CD4-positive, alpha-beta memory T cell (primary cell): ENCODE measurements at regions of chr16 and their contacts with region 1.

Region 1: DNA sequence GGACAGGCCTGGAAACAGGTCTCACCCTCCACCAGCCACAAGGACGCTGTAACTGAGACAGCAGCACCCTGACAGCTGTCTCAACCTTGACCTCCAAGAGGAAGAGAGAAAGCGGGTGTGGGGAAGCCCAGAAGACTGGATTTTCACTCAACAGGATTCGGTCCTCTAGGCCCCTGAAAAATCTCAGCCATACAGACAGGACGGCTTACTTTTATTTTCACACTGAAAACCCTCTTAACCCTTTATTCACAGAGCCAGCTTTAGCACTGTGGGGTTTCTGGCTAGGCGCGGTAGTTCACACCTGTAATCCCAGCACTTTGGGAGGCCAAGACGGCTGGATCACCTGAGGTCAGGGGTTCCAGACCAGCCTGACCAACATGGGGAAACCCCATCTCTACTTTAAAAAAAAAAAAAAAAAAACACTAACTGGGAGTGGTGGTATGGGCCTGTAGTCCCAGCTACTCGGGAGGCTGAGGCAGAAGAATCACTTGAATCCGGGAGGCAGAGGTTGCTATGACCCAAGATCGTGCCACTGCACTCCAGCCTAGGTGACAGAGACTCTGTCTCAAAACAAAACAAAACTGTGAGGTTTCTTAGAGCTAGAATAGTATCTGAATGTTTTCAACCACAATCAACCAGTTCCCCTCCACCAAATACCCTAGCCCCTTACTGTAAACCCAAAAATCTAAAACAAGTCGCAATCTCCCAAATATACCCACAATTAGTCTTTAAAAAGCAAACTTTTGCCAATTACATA is 5.3 kb downstream of the ANKRD11 start:
- DNase-seq: peak in 2 of 5 donors; percentile 19 to 56
- H3K4me3 ChIP-seq: peak overlapping the region in 1 of 2 donors; percentile 6
- H3K4me3 Mint-ChIP-seq: peak overlapping the region; percentile 72 to 92 (median 84)
- H3K27ac ChIP-seq: peak overlapping the region; percentile 42
- H3K27ac Mint-ChIP-seq: peak overlapping the region; percentile 86 to 98 (median 94)
- H3K4me1 ChIP-seq: peaks cover 89% of the 10 kb centered on the region
- H3K4me1 Mint-ChIP-seq: peaks cover 70 to 91% (median 81%) of the 10 kb centered on the region in 4 donors
- H3K27me3 ChIP-seq: no peaks in the 10 kb centered on the region
- H3K27me3 Mint-ChIP-seq: no peaks in the 10 kb centered on the region

Region 2: GRCh38 chr16:89410794-89411309 is 74.2 kb before region 1 on chr16:
- CTCF ChIA-PET with region 1: interaction called, 4 read pairs
- POLR2A ChIA-PET with region 1: interaction called, 31 read pairs
- intact Hi-C with region 1: loop called (anchors 1 kb)
- DNase-seq: peak in 2 of 5 donors; percentile 21 to 28
- H3K4me3 ChIP-seq: no peak overlapping the region
- H3K4me3 Mint-ChIP-seq: peak overlapping the region in 7 of 8 donors; percentile 59 to 84 (median 69)
- H3K27ac ChIP-seq: peak overlapping the region; percentile 45
- H3K27ac Mint-ChIP-seq: peak overlapping the region; percentile 88 to 97 (median 95)
- H3K4me1 ChIP-seq: peaks cover 93% of the 10 kb centered on the region
- H3K4me1 Mint-ChIP-seq: peaks cover 57 to 93% (median 79%) of the 10 kb centered on the region in 4 donors
- H3K27me3 ChIP-seq: no peaks in the 10 kb centered on the region
- H3K27me3 Mint-ChIP-seq: no peaks in the 10 kb centered on the region

Region 3: GRCh38 chr16:89442990-89443731 is 41.9 kb before region 1 on chr16:
- CTCF ChIA-PET with region 1: interaction called, 3 read pairs
- POLR2A ChIA-PET with region 1: interaction called, 14 read pairs
- intact Hi-C with region 1: loop called (anchors 2 kb)
- DNase-seq: peak in 1 of 5 donors; percentile 58
- H3K4me3 ChIP-seq: no peak overlapping the region
- H3K4me3 Mint-ChIP-seq: peak overlapping the region in 7 of 8 donors; percentile 32 to 70 (median 67)
- H3K27ac ChIP-seq: no peak overlapping the region
- H3K27ac Mint-ChIP-seq: peak overlapping the region; percentile 67 to 91 (median 84)
- H3K4me1 ChIP-seq: peaks cover 100% of the 10 kb centered on the region
- H3K4me1 Mint-ChIP-seq: peaks cover 0 to 100% (median 81%) of the 10 kb centered on the region in 4 donors
- H3K27me3 ChIP-seq: no peaks in the 10 kb centered on the region
- H3K27me3 Mint-ChIP-seq: no peaks in the 10 kb centered on the region

Region 4: GRCh38 chr16:89473791-89474414 is 11.2 kb before region 1 on chr16:
- CTCF ChIA-PET with region 1: interaction called, 6 read pairs
- POLR2A ChIA-PET with region 1: interaction called, 29 read pairs
- intact Hi-C with region 1: no loop called
- DNase-seq: peak in 1 of 5 donors; percentile 49
- H3K4me3 ChIP-seq: no peak overlapping the region
- H3K4me3 Mint-ChIP-seq: peak overlapping the region in 7 of 8 donors; percentile 64 to 84 (median 77)
- H3K27ac ChIP-seq: no peak overlapping the region
- H3K27ac Mint-ChIP-seq: peak overlapping the region in 5 of 7 donors; percentile 32 to 83 (median 75)
- H3K4me1 ChIP-seq: peaks cover 95% of the 10 kb centered on the region
- H3K4me1 Mint-ChIP-seq: peaks cover 62 to 98% (median 82%) of the 10 kb centered on the region in 4 donors
- H3K27me3 ChIP-seq: no peaks in the 10 kb centered on the region
- H3K27me3 Mint-ChIP-seq: no peaks in the 10 kb centered on the region

Region 5: DNA sequence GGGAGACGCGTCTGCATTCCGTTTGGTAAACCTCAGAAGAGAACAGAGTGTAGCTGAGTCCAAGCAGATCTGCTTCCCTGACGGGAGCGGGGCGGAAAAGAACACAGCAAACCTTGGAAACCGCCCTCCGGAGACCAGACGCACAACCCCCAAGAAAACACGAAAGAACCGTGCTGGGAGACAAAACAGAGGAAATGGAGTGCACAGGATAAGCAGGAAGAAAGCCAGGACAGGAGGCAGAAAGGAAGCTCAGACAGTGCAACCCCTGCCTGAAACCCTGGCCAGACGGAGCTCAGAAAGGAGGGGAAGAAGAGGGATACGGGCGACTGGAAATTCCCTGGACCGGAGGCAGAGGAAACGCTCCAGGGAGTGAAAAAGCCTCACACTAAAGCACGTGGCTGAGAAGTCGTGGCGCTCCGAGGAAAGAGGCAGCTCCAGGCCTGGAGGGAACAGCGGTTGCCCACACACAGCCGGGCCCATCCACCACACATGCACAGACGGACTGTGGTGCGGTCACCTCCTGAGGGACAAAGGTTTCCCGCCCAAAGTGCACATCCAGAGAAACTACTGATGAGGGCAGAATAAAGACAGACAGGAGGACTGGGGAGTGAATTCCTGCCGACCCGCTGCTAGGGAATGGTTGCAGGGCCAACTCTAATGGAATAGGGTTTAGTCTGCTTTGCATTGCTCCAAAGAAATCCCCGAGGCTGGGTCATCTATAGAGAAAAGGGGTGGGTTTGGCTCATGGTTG is 138.6 kb after region 1 on chr16:
- CTCF ChIA-PET with region 1: no interaction called
- POLR2A ChIA-PET with region 1: no interaction called
- intact Hi-C with region 1: no loop called
- DNase-seq: no peak
- H3K4me3 ChIP-seq: no peak overlapping the region
- H3K4me3 Mint-ChIP-seq: peak overlapping the region in 1 of 8 donors; percentile 25
- H3K27ac ChIP-seq: no peak overlapping the region
- H3K27ac Mint-ChIP-seq: peak overlapping the region in 1 of 7 donors; percentile 82
- H3K4me1 ChIP-seq: no peaks in the 10 kb centered on the region
- H3K4me1 Mint-ChIP-seq: no peaks in the 10 kb centered on the region
- H3K27me3 ChIP-seq: no peaks in the 10 kb centered on the region
- H3K27me3 Mint-ChIP-seq: peaks cover 6 to 11% of the 10 kb centered on the region in 2 donors